ENCODE measurements at regions of chr1 and their contacts with region 1.

Region 1: DNA sequence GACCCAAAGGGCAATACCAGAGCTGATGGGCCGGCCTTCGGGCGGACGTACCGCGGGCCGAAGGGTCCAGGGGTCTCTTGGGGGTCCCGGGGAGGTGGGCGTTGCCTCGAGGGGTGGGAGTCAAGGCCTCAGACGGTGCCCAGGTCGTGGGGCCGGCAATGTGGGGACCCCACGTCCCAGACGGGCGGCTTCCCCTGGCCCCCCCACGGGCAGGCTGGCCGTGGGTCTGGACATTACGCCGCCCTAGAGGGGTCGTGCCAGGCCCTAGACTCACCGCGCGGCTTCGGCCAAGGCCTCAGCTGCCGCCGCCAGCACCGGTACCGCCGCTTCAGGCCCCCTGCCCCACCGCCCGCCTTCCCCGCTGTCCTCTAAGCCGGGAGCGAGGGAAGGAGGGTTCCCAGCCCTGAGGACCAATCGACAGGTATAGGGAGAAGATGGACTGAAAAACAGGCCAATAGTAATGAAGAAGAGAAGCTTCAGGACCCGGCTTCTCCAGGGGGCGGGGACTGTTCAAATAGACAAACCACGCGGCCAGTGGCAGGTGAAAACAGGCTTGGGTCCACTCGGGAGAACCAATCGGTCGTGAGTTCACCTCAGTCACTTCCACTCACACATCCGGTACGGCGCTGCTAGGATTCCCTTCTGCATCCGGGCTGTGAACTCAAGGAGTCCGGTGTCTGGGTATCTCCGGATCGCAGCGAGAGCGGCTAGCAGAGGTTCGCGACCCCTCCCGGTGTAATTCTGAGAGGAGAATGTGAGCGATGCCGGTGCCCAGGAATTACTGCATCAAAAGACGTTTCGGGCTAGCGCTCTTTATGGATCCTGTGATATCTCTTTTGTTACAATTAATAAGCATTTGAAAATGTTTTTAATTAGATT is at the start of gene MTOR:
- DNase-seq: peak; percentile 76 to 99 (median 98)
- ATAC-seq: peak; percentile 98
- H3K4me3 ChIP-seq: peak within 1 kb of the TSS; percentile 90
- H3K4me3 Mint-ChIP-seq: peak within 1 kb of the TSS; percentile 87 to 98 (median 93)
- H3K27ac ChIP-seq: peak within 1 kb of the TSS; percentile 83
- H3K27ac Mint-ChIP-seq: peak within 1 kb of the TSS; percentile 84 to 96 (median 90)
- H3K4me1 ChIP-seq: peaks cover 9 to 14% of the 10 kb centered on the region in 2 donors
- H3K4me1 Mint-ChIP-seq: peaks cover 6 to 31% (median 22%) of the 10 kb centered on the region in 7 donors
- H3K27me3 ChIP-seq: no peaks in the 10 kb centered on the region
- H3K27me3 Mint-ChIP-seq: peaks cover 0 to 5% (median 0%) of the 10 kb centered on the region in 5 donors
- total RNA-seq, gene MTOR: 38.8 to 47.9 (median 46.2) TPM

Region 2: DNA sequence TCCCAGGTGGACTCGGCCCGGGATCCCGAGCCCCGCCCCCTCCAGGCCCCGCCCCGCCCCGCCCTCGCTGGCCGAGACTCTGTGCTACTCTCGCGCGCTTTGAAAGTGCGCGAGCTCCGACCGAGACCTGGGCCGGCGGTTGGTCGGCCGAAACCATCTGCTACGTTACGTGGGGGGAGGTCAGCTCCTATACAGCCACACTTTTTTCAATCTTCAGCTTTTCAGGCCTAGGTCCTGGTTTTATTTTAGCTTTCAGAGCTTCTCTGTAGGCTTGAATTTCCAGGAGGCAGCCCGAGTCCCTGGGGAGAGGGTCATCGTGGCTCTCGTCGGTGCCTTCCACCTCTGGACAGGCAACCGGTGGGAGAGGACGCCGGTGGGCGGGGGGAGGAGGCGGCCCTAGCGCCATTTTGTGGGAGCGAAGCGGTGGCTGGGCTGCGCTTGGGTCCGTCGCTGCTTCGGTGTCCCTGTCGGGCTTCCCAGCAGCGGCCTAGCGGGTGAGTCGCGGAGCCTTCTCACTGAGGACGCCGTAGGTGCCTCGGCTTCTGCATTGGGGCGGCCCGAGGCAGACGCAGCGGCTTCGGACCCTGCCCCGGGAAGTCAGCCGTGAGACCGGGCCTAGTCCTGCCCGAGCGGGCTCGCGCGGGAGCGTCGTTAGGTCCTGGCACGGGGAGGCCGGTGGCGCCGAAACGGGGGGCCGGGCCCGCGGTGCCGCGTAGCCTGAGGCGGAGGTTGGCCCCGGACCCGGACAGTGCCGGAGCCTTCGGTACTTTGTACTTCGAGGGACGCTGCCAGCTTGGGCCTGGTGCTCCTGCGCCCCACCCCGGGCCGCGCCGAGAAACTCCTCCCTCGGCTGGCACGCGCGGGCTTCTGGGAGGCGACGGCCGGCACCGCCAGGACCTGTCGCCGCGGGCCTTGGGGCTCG is 249.9 kb before region 1 on chr1 and contains the start of gene TARDBP:
- CTCF ChIA-PET with region 1: no interaction called
- POLR2A ChIA-PET with region 1: interaction called, 3 read pairs
- intact Hi-C with region 1: loop called in 1 of 2 experiments (anchors 1 kb)
- DNase-seq: peak; percentile 88 to 95 (median 93)
- ATAC-seq: peak; percentile 95
- H3K4me3 ChIP-seq: peak within 1 kb of the TSS; percentile 74
- H3K4me3 Mint-ChIP-seq: peak within 1 kb of the TSS; percentile 86 to 96 (median 93)
- H3K27ac ChIP-seq: peak within 1 kb of the TSS; percentile 94
- H3K27ac Mint-ChIP-seq: peak within 1 kb of the TSS; percentile 95 to 98 (median 98)
- H3K4me1 ChIP-seq: peaks cover 19 to 24% of the 10 kb centered on the region in 2 donors
- H3K4me1 Mint-ChIP-seq: peaks cover 15 to 36% (median 26%) of the 10 kb centered on the region in 7 donors
- H3K27me3 ChIP-seq: no peaks in the 10 kb centered on the region
- H3K27me3 Mint-ChIP-seq: no peaks in the 10 kb centered on the region
- total RNA-seq, gene TARDBP: 114 to 196 (median 174) TPM

Region 3: GRCh38 chr1:11099310-11100149 is 162.9 kb before region 1 on chr1 and contains the start of gene EXOSC10:
- CTCF ChIA-PET with region 1: no interaction called
- POLR2A ChIA-PET with region 1: no interaction called
- intact Hi-C with region 1: loop called in 1 of 2 experiments (anchors 5 kb)
- DNase-seq: peak; percentile 90 to 97 (median 95)
- ATAC-seq: peak; percentile 99
- H3K4me3 ChIP-seq: peak within 1 kb of the TSS; percentile 74
- H3K4me3 Mint-ChIP-seq: peak within 1 kb of the TSS; percentile 87 to 99 (median 96)
- H3K27ac ChIP-seq: peak within 1 kb of the TSS; percentile 88
- H3K27ac Mint-ChIP-seq: peak within 1 kb of the TSS; percentile 91 to 97 (median 95)
- H3K4me1 ChIP-seq: peaks cover 3 to 4% of the 10 kb centered on the region in 2 donors
- H3K4me1 Mint-ChIP-seq: peaks cover 6 to 27% (median 20%) of the 10 kb centered on the region in 7 donors
- H3K27me3 ChIP-seq: no peaks in the 10 kb centered on the region
- H3K27me3 Mint-ChIP-seq: no peaks in the 10 kb centered on the region
- total RNA-seq, gene EXOSC10: 72.0 to 83.4 (median 80.9) TPM

Region 4: DNA sequence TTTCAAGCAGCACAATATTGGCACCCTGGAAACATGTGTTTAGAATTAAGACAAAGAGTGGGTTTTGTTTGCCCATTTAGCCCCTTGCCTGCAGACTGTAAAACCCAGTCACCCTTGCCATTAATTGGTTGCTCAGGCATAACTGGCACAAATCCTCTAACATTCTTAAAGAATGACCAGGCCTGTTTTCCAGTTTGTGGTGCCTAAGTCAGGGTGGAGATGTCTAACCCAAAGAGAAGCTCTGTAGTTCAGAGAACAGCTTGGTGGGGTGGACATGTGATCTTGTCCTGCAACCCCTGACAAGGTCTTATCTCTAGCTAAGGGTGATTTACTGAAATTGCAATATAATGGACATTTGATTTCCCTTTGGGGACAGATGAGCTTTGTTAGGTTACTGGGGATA is 82.1 kb before region 1 on chr1:
- CTCF ChIA-PET with region 1: no interaction called
- POLR2A ChIA-PET with region 1: no interaction called
- intact Hi-C with region 1: no loop called
- DNase-seq: no peak
- ATAC-seq: no peak
- H3K4me3 ChIP-seq: no peak overlapping the region
- H3K4me3 Mint-ChIP-seq: no peak overlapping the region
- H3K27ac ChIP-seq: no peak overlapping the region
- H3K27ac Mint-ChIP-seq: no peak overlapping the region
- H3K4me1 ChIP-seq: no peaks in the 10 kb centered on the region
- H3K4me1 Mint-ChIP-seq: peaks cover 0 to 1% (median 0%) of the 10 kb centered on the region in 7 donors
- H3K27me3 ChIP-seq: no peaks in the 10 kb centered on the region
- H3K27me3 Mint-ChIP-seq: no peaks in the 10 kb centered on the region

Region 5: GRCh38 chr1:11281518-11282331 is 19.3 kb after region 1 on chr1:
- CTCF ChIA-PET with region 1: no interaction called
- POLR2A ChIA-PET with region 1: interaction called, 26 read pairs
- intact Hi-C with region 1: loop called in 1 of 2 experiments (anchors 1 kb)
- DNase-seq: no peak
- ATAC-seq: no peak
- H3K4me3 ChIP-seq: peak overlapping the region; percentile 40
- H3K4me3 Mint-ChIP-seq: peak overlapping the region; percentile 49 to 85 (median 73)
- H3K27ac ChIP-seq: peak overlapping the region; percentile 71
- H3K27ac Mint-ChIP-seq: peak overlapping the region; percentile 70 to 98 (median 90)
- H3K4me1 ChIP-seq: peaks cover 21 to 81% of the 10 kb centered on the region in 2 donors
- H3K4me1 Mint-ChIP-seq: peaks cover 64 to 97% (median 87%) of the 10 kb centered on the region in 7 donors
- H3K27me3 ChIP-seq: no peaks in the 10 kb centered on the region
- H3K27me3 Mint-ChIP-seq: no peaks in the 10 kb centered on the region

Region 6: DNA sequence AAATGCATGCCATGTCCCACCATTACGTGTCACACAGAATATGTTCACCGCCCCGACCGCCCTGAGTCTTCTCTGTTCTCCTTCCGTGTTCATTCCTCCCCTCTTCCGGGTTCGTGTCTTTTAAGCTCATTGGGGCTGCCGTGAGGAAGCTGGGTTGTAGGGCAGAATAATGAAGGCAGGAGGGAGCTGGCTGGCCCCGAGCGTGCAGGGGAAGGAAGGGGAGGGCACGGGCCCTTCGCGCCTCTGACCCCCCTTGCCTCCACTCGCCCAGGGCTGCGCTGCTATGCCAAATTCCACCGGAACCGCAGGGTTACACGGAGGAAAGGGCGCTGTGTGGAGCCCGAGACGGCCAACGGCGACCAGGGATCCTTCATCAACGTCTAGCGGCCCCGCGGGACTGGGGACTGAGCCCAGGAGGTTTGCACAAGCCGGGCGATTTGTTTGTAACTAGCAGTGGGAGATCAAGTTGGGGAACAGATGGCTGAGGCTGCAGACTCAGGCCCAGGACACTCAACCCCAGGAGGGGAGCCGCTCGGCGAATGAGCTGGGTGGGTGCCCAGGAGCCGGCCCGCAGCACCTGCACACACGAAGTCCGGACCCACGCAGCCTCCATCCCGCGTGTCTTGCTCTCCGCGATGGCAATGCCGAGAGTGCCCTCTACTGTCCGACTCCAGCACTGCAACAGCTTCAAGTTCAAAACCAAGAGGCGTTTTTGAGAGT is 457.1 kb after region 1 on chr1:
- CTCF ChIA-PET with region 1: interaction called, 3 read pairs
- POLR2A ChIA-PET with region 1: no interaction called
- intact Hi-C with region 1: loop called in 1 of 2 experiments (anchors 1 kb)
- DNase-seq: peak; percentile 73 to 89 (median 82)
- ATAC-seq: peak; percentile 92
- H3K4me3 ChIP-seq: peak overlapping the region; percentile 66
- H3K4me3 Mint-ChIP-seq: peak overlapping the region; percentile 71 to 89 (median 86)
- H3K27ac ChIP-seq: peak overlapping the region; percentile 62
- H3K27ac Mint-ChIP-seq: peak overlapping the region; percentile 73 to 97 (median 93)
- H3K4me1 ChIP-seq: peaks cover 0 to 5% of the 10 kb centered on the region in 2 donors
- H3K4me1 Mint-ChIP-seq: peaks cover 8 to 21% (median 15%) of the 10 kb centered on the region in 7 donors
- H3K27me3 ChIP-seq: no peaks in the 10 kb centered on the region
- H3K27me3 Mint-ChIP-seq: peaks cover 0 to 10% (median 0%) of the 10 kb centered on the region in 5 donors

Region 7: GRCh38 chr1:11934302-11935056 is 672.1 kb after region 1 on chr1 and contains the start of gene PLOD1:
- CTCF ChIA-PET with region 1: no interaction called
- POLR2A ChIA-PET with region 1: no interaction called
- intact Hi-C with region 1: loop called in 1 of 2 experiments (anchors 5 kb)
- DNase-seq: peak; percentile 50 to 83 (median 67)
- ATAC-seq: peak; percentile 100
- H3K4me3 ChIP-seq: peak within 1 kb of the TSS; percentile 68
- H3K4me3 Mint-ChIP-seq: peak within 1 kb of the TSS; percentile 77 to 87 (median 82)
- H3K27ac ChIP-seq: peak within 1 kb of the TSS; percentile 54
- H3K27ac Mint-ChIP-seq: peak within 1 kb of the TSS in 4 of 9 donors; percentile 45 to 59 (median 52)
- H3K4me1 ChIP-seq: peaks cover 3 to 7% of the 10 kb centered on the region in 2 donors
- H3K4me1 Mint-ChIP-seq: peaks cover 0 to 18% (median 0%) of the 10 kb centered on the region in 7 donors
- H3K27me3 ChIP-seq: no peaks in the 10 kb centered on the region
- H3K27me3 Mint-ChIP-seq: no peaks in the 10 kb centered on the region
- total RNA-seq, gene PLOD1: 3.6 to 24.2 (median 4.8) TPM

Measured in naive thymus-derived CD4-positive, alpha-beta T cell (primary cell).